ENCODE measurements at regions of chr3 and their contacts with region 1.

Region 1: DNA sequence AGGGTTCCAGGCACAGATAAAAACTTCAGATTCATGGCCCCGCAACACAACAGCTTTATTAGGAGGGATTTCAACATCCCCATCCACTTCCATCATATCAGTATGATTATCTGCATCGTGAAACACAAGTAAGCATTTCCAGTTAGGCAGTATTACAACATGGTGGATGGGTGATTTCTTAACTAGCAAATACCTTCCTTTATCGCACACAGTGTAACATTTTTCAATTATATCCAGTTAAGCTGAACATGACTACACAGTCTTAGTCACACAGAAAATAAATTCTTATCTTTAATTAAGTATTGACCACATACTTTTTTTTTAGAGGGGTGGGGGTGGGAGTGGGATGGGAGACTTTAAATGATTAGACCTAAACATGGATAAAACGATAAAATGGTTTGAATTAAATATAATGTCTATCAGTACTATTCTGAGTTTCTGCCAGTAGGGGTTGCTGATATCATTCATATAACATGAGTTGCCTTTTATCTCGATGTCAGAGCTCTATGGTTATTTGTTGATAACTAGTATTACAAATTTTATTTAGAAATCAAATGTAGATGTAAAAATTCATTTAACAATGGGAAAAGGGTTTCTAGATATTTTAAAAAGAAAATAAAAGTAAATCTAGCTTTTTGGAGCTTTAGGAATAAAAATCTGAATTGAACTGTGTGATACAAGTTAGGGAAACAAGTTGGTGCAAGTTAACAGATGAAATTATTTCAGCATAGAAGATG is 146.6 kb downstream of the TBL1XR1 start:
- DNase-seq: peak in 4 of 5 donors; percentile 53 to 64 (median 55)
- H3K4me3 ChIP-seq: no peak overlapping the region
- H3K4me3 Mint-ChIP-seq: no peak overlapping the region
- H3K27ac ChIP-seq: no peak overlapping the region
- H3K27ac Mint-ChIP-seq: peak overlapping the region in 6 of 7 donors; percentile 16 to 76 (median 38)
- H3K4me1 ChIP-seq: peaks cover 8% of the 10 kb centered on the region
- H3K4me1 Mint-ChIP-seq: peaks cover 15 to 19% (median 16%) of the 10 kb centered on the region in 4 donors
- H3K27me3 ChIP-seq: no peaks in the 10 kb centered on the region
- H3K27me3 Mint-ChIP-seq: no peaks in the 10 kb centered on the region

Region 2: GRCh38 chr3:176967497-176967896 is 83.2 kb before region 1 on chr3:
- CTCF ChIA-PET with region 1: no interaction called
- POLR2A ChIA-PET with region 1: no interaction called
- intact Hi-C with region 1: no loop called
- DNase-seq: no peak
- H3K4me3 ChIP-seq: no peak overlapping the region
- H3K4me3 Mint-ChIP-seq: no peak overlapping the region
- H3K27ac ChIP-seq: no peak overlapping the region
- H3K27ac Mint-ChIP-seq: no peak overlapping the region
- H3K4me1 ChIP-seq: no peaks in the 10 kb centered on the region
- H3K4me1 Mint-ChIP-seq: peaks cover 0 to 9% (median 1%) of the 10 kb centered on the region in 4 donors
- H3K27me3 ChIP-seq: no peaks in the 10 kb centered on the region
- H3K27me3 Mint-ChIP-seq: peaks cover 2% of the 10 kb centered on the region in 2 donors

Region 3: GRCh38 chr3:177144923-177145780 is 94.5 kb after region 1 on chr3:
- CTCF ChIA-PET with region 1: interaction called, 10 read pairs
- POLR2A ChIA-PET with region 1: interaction called, 4 read pairs
- intact Hi-C with region 1: loop called (anchors 5 kb)
- DNase-seq: peak; percentile 48 to 72 (median 60)
- H3K4me3 ChIP-seq: no peak overlapping the region
- H3K4me3 Mint-ChIP-seq: peak overlapping the region; percentile 57 to 78 (median 72)
- H3K27ac ChIP-seq: peak overlapping the region; percentile 61
- H3K27ac Mint-ChIP-seq: peak overlapping the region; percentile 82 to 96 (median 92)
- H3K4me1 ChIP-seq: peaks cover 93% of the 10 kb centered on the region
- H3K4me1 Mint-ChIP-seq: peaks cover 63 to 84% (median 70%) of the 10 kb centered on the region in 4 donors
- H3K27me3 ChIP-seq: no peaks in the 10 kb centered on the region
- H3K27me3 Mint-ChIP-seq: no peaks in the 10 kb centered on the region

Region 4: DNA sequence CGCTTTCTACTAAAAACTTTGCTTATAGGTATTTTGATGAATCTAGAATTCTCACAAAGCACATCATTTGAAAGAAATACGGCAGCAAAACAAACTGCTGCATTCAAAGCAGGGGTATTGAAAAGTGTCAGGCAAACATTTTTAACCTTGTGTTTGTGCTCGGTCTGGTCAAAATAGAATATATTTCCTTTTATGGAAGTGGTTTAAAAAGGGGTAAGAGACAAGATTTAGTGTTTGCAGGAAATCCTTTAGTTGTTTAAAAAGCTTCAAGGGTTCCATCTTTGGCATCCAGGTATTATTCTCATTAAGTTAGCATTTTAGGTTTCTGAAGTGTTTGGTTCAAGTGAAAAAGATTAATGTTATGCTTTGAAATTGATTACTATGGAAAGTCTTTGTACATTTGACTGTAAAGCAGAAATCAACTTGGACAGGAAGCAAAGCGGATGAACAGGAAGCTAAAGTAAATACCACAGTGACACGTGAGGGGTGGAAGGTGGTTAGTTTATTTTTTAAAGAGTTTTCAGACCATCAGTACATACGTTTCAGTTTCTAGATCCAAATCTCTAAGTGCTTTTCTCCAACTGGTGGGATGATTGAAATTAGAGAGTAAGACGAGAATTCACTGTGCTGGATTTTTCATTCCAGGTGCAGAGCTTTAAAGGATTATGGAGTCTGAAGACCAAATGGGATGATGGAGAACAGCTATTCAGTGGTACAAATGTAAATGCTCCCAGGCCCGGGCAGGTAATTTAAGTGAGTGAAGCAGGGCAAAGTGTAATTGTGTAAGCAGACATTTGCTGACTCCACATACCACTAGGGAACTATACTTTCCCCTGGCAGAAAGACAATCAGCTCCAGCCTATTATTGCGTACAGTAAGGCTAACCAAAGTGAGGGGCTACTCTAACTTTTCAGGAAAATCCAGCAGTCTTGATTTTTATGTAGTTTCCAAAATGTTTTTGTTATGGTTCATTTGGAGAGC is 488.4 kb after region 1 on chr3:
- CTCF ChIA-PET with region 1: interaction called, 4 read pairs
- POLR2A ChIA-PET with region 1: no interaction called
- intact Hi-C with region 1: loop called (anchors 5 kb)
- DNase-seq: peak in 4 of 5 donors; percentile 48 to 59 (median 56)
- H3K4me3 ChIP-seq: peak overlapping the region in 1 of 2 donors; percentile 8
- H3K4me3 Mint-ChIP-seq: peak overlapping the region; percentile 55 to 87 (median 84)
- H3K27ac ChIP-seq: peak overlapping the region; percentile 36
- H3K27ac Mint-ChIP-seq: peak overlapping the region; percentile 79 to 93 (median 92)
- H3K4me1 ChIP-seq: peaks cover 46% of the 10 kb centered on the region
- H3K4me1 Mint-ChIP-seq: peaks cover 47 to 68% (median 55%) of the 10 kb centered on the region in 4 donors
- H3K27me3 ChIP-seq: no peaks in the 10 kb centered on the region
- H3K27me3 Mint-ChIP-seq: no peaks in the 10 kb centered on the region

Region 5: DNA sequence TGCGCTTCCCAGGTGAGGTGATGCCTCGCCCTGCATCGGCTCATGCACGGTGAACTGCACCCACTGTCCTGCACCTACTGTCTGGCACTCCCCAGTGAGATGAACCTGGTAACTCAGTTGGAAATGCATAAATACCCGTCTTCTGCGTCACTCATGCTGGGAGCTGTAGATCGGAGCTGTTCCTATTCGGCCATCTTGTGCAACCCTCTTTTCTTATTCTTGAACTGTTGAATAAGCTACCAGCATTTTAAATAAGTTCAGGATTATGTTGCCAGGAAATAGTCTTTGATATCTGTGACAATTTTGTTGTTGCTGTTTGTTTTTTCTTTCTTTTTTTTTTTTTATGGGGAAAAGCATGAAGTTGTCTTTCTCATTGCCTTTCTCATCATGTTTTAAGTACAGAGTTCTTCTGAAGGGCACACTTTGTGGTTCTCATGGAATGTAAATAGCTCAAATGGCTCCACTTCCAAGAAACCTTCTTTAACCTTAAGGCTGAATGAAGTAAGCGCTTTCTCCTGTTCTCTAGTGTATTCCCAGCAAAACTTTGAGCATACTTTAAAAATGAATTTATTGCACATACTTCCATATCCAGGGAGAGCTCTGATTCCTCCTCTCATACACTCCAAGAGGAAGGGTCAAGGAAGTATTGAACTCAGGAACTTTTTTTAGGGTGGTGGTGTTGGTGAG is 614.6 kb after region 1 on chr3:
- CTCF ChIA-PET with region 1: interaction called, 24 read pairs
- POLR2A ChIA-PET with region 1: no interaction called
- intact Hi-C with region 1: loop called (anchors 1 kb)
- DNase-seq: no peak
- H3K4me3 ChIP-seq: no peak overlapping the region
- H3K4me3 Mint-ChIP-seq: no peak overlapping the region
- H3K27ac ChIP-seq: no peak overlapping the region
- H3K27ac Mint-ChIP-seq: peak overlapping the region in 1 of 7 donors; percentile 54
- H3K4me1 ChIP-seq: no peaks in the 10 kb centered on the region
- H3K4me1 Mint-ChIP-seq: peaks cover 0 to 6% (median 2%) of the 10 kb centered on the region in 4 donors
- H3K27me3 ChIP-seq: no peaks in the 10 kb centered on the region
- H3K27me3 Mint-ChIP-seq: no peaks in the 10 kb centered on the region

Region 6: GRCh38 chr3:178325330-178325729 is 1274.7 kb after region 1 on chr3:
- CTCF ChIA-PET with region 1: interaction called, 4 read pairs
- POLR2A ChIA-PET with region 1: no interaction called
- intact Hi-C with region 1: loop called (anchors 5 kb)
- DNase-seq: peak in 1 of 5 donors; percentile 1
- H3K4me3 ChIP-seq: no peak overlapping the region
- H3K4me3 Mint-ChIP-seq: no peak overlapping the region
- H3K27ac ChIP-seq: no peak overlapping the region
- H3K27ac Mint-ChIP-seq: no peak overlapping the region
- H3K4me1 ChIP-seq: no peaks in the 10 kb centered on the region
- H3K4me1 Mint-ChIP-seq: no peaks in the 10 kb centered on the region
- H3K27me3 ChIP-seq: no peaks in the 10 kb centered on the region
- H3K27me3 Mint-ChIP-seq: no peaks in the 10 kb centered on the region

Measured in CD4-positive, alpha-beta memory T cell (primary cell).